Sigmoid colon (tissue), 7 donors: ENCODE measurements at regions of chr7 and their contacts with region 1.

Region 1: GRCh38 chr7:107563775-107564552 is at the starts of genes COG5 and DUS4L:
- DNase-seq: peak; percentile 89
- H3K4me3 ChIP-seq: peak within 1 kb of the TSS; percentile 85 to 98 (median 90)
- H3K27ac ChIP-seq: peak within 1 kb of the TSS; percentile 92 to 96 (median 93)
- H3K4me1 ChIP-seq: peaks cover 0 to 49% (median 30%) of the 10 kb centered on the region in 4 donors
- H3K27me3 ChIP-seq: no peaks in the 10 kb centered on the region
- CTCF ChIP-seq: no peak
- EP300 ChIP-seq: peak in 1 of 4 donors; percentile 9
- POLR2A ChIP-seq: peak in 1 of 2 donors; percentile 58
- total RNA-seq, gene COG5: 26.8 to 73.4 (median 30.2) TPM
- total RNA-seq, gene DUS4L: 5.4 to 10.3 (median 8.3) TPM

Region 2: GRCh38 chr7:106914018-106914607 is 649.9 kb before region 1 on chr7:
- intact Hi-C with region 1: no loop called
- DNase-seq: no peak
- H3K4me3 ChIP-seq: no peak overlapping the region
- H3K27ac ChIP-seq: no peak overlapping the region
- H3K4me1 ChIP-seq: no peaks in the 10 kb centered on the region
- H3K27me3 ChIP-seq: no peaks in the 10 kb centered on the region
- CTCF ChIP-seq: no peak
- EP300 ChIP-seq: no peak
- POLR2A ChIP-seq: no peak

Region 3: GRCh38 chr7:107408349-107408748 is 155.6 kb before region 1 on chr7:
- intact Hi-C with region 1: no loop called
- DNase-seq: no peak
- H3K4me3 ChIP-seq: no peak overlapping the region
- H3K27ac ChIP-seq: no peak overlapping the region
- H3K4me1 ChIP-seq: peaks cover 0 to 6% (median 0%) of the 10 kb centered on the region in 4 donors
- H3K27me3 ChIP-seq: no peaks in the 10 kb centered on the region
- CTCF ChIP-seq: no peak
- EP300 ChIP-seq: no peak
- POLR2A ChIP-seq: no peak

Region 4: DNA sequence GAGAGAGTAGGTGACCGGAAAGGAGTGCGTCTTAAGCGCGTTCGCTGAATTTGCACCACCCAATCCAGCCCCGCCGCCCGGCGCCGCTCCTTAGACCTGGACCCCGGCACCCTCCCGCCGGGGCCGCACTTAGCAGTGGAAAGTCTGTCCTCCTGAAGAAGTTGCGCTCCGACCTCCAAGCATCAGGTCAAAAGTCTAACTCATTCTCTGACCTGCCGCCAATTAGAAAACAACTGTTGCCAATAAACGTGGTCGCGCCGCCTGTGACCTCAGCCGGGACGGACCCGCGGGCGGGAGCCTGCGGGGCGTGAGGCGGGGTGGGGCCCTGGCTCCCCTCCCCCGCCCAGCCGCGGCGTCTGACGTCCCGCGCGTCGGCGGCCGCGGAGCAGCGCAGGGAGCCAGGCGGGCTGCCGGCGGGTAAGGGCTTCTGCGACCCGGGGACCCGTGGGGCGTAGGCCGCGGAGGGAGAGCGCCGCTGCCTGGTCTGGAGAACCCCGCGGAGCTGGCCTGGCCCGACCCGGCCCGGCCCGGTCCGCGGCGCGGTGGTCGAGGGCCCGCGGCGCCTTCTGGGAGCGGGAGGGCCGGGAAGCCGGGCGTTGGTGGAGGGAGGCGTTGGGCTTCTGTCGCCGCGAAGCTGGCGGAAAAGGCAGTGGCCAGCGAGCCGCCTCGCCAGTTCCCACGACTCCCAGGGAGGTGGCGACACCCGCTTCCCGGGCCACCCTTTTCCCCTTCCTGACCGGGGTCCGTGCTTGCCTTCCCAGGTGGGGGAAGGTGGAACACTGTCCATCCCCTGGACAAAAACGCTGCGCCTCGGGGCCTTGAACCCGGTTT is 16.1 kb after region 1 on chr7 and contains the start of gene BCAP29:
- intact Hi-C with region 1: loop called (anchors 1 kb)
- DNase-seq: peak; percentile 84
- H3K4me3 ChIP-seq: peak within 1 kb of the TSS; percentile 60 to 92 (median 75)
- H3K27ac ChIP-seq: peak within 1 kb of the TSS; percentile 92 to 96 (median 94)
- H3K4me1 ChIP-seq: peaks cover 0 to 39% (median 25%) of the 10 kb centered on the region in 4 donors
- H3K27me3 ChIP-seq: no peaks in the 10 kb centered on the region
- CTCF ChIP-seq: peak in 1 of 4 experiments; percentile 4
- EP300 ChIP-seq: no peak
- POLR2A ChIP-seq: no peak
- total RNA-seq, gene BCAP29: 104 to 173 (median 137) TPM

Region 5: GRCh38 chr7:107594961-107595737 is 31.2 kb after region 1 on chr7:
- intact Hi-C with region 1: loop called (anchors 5 kb)
- DNase-seq: no peak
- H3K4me3 ChIP-seq: no peak overlapping the region
- H3K27ac ChIP-seq: peak overlapping the region; percentile 10 to 81 (median 70)
- H3K4me1 ChIP-seq: peaks cover 0 to 51% (median 28%) of the 10 kb centered on the region in 4 donors
- H3K27me3 ChIP-seq: no peaks in the 10 kb centered on the region
- CTCF ChIP-seq: no peak
- EP300 ChIP-seq: no peak
- POLR2A ChIP-seq: no peak

Region 6: DNA sequence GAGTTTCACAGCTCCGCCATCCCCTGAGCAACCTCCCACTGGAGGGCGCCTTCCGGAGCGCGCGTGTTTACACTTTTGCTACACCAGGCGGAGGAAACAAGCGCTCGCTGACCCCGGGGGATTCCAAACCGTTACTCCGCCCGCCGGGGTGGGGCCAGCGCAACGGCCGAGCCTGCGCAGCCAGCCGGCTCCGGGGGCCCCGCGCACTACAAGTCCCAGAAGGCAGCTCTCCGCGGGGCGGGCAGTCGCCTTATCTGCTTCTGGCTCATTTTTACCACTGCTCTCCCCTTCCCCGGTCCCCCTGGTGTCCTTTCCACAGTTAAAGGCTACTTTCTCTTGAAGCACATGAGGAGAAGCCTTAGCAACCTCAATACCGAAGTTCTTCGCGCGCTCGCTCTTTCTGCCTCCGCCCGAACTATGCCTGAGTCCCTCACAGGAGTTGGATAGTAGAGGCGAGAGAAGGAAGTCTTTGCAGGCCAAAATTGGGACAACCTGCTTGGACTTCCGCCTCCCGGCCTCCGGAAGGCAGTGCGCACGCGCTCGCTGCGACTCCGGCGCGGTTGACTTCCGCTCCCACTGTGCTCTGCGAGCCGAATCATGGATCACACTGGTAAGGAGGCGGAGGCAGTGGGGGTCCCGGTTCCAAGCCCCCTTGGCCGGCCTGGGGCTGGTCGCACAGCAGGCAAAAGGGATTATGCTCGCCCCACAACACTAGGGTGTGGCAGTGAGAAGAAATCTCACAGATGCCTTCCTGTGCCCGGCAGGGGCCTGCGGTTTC is 179.8 kb after region 1 on chr7 and contains the start of gene CBLL1:
- intact Hi-C with region 1: loop called (anchors 5 kb)
- DNase-seq: peak; percentile 98
- H3K4me3 ChIP-seq: peak within 1 kb of the TSS; percentile 72 to 91 (median 82)
- H3K27ac ChIP-seq: peak within 1 kb of the TSS; percentile 84 to 97 (median 92)
- H3K4me1 ChIP-seq: peaks cover 0 to 49% (median 40%) of the 10 kb centered on the region in 4 donors
- H3K27me3 ChIP-seq: no peaks in the 10 kb centered on the region
- CTCF ChIP-seq: peak; percentile 52 to 86 (median 74)
- EP300 ChIP-seq: no peak
- POLR2A ChIP-seq: peak; percentile 39 to 86
- total RNA-seq, gene CBLL1: 25.2 to 47.4 (median 38.9) TPM

Region 7: DNA sequence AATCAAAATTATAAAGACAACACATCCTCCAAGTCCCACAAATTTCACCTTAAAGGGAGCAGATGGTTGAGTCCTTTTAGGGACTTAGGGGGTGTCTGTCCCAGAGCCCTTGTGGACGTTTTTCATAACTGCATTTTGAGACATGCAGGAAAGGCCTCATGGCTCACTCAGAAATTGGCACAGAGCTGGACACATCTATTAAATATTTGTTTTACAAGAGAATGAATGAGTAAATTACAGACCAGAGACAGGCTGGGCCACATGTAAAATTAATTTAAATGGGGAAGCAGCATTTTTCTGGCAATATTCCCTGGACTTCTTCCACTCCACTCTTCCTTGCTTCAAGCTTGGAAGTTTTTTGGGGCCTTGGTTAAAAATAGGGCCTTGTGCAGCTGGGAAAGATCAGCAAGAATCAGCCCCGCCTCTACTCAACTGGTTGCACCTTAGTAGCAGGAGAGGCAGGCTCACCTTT is 419.0 kb after region 1 on chr7:
- intact Hi-C with region 1: no loop called
- DNase-seq: peak; percentile 82
- H3K4me3 ChIP-seq: no peak overlapping the region
- H3K27ac ChIP-seq: peak overlapping the region; percentile 66 to 73 (median 69)
- H3K4me1 ChIP-seq: peaks cover 0 to 41% (median 36%) of the 10 kb centered on the region in 4 donors
- H3K27me3 ChIP-seq: no peaks in the 10 kb centered on the region
- CTCF ChIP-seq: peak in 3 of 4 experiments; percentile 25 to 57 (median 38)
- EP300 ChIP-seq: peak in 1 of 4 donors; percentile 41
- POLR2A ChIP-seq: no peak